ENCODE measurements at regions of chr4 and their contacts with region 1.

Region 1: GRCh38 chr4:98260579-98261290 is 449 bp upstream of the RAP1GDS1 start:
- DNase-seq: peak; percentile 96 to 98
- H3K4me3 ChIP-seq: peak overlapping the region; percentile 80 to 83
- H3K27ac ChIP-seq: peak overlapping the region; percentile 95 to 97
- H3K4me1 ChIP-seq: peaks cover 0 to 23% (median 8%) of the 10 kb centered on the region in 4 donors
- H3K27me3 ChIP-seq: no peaks in the 10 kb centered on the region
- CTCF ChIP-seq: no peak

Region 2: GRCh38 chr4:97841512-97841911 is 419.2 kb before region 1 on chr4:
- intact Hi-C with region 1: no loop called
- DNase-seq: no peak
- H3K4me3 ChIP-seq: no peak overlapping the region
- H3K27ac ChIP-seq: no peak overlapping the region
- H3K4me1 ChIP-seq: no peaks in the 10 kb centered on the region
- H3K27me3 ChIP-seq: no peaks in the 10 kb centered on the region
- CTCF ChIP-seq: no peak

Region 3: GRCh38 chr4:98232202-98232601 is 28.5 kb before region 1 on chr4:
- intact Hi-C with region 1: loop called (anchors 1 kb)
- DNase-seq: no peak
- H3K4me3 ChIP-seq: no peak overlapping the region
- H3K27ac ChIP-seq: no peak overlapping the region
- H3K4me1 ChIP-seq: no peaks in the 10 kb centered on the region
- H3K27me3 ChIP-seq: no peaks in the 10 kb centered on the region
- CTCF ChIP-seq: no peak

Region 4: GRCh38 chr4:98289375-98289774 is 28.6 kb after region 1 on chr4:
- intact Hi-C with region 1: no loop called
- DNase-seq: no peak
- H3K4me3 ChIP-seq: no peak overlapping the region
- H3K27ac ChIP-seq: no peak overlapping the region
- H3K4me1 ChIP-seq: peaks cover 0 to 31% (median 3%) of the 10 kb centered on the region in 4 donors
- H3K27me3 ChIP-seq: no peaks in the 10 kb centered on the region
- CTCF ChIP-seq: no peak

Measured in tibial artery (tissue), 4 donors.